ENCODE measurements at regions of chr19 and their contacts with region 1.

Region 1: GRCh38 chr19:46081928-46082727 is 41.3 kb upstream of the IGFL4 start:
- DNase-seq: no peak
- H3K4me3 ChIP-seq: no peak overlapping the region
- H3K27ac ChIP-seq: no peak overlapping the region
- H3K4me1 ChIP-seq: peaks cover 5% of the 10 kb centered on the region
- H3K27me3 ChIP-seq: peaks cover 76% of the 10 kb centered on the region
- CTCF ChIP-seq: peak; percentile 75

Region 2: DNA sequence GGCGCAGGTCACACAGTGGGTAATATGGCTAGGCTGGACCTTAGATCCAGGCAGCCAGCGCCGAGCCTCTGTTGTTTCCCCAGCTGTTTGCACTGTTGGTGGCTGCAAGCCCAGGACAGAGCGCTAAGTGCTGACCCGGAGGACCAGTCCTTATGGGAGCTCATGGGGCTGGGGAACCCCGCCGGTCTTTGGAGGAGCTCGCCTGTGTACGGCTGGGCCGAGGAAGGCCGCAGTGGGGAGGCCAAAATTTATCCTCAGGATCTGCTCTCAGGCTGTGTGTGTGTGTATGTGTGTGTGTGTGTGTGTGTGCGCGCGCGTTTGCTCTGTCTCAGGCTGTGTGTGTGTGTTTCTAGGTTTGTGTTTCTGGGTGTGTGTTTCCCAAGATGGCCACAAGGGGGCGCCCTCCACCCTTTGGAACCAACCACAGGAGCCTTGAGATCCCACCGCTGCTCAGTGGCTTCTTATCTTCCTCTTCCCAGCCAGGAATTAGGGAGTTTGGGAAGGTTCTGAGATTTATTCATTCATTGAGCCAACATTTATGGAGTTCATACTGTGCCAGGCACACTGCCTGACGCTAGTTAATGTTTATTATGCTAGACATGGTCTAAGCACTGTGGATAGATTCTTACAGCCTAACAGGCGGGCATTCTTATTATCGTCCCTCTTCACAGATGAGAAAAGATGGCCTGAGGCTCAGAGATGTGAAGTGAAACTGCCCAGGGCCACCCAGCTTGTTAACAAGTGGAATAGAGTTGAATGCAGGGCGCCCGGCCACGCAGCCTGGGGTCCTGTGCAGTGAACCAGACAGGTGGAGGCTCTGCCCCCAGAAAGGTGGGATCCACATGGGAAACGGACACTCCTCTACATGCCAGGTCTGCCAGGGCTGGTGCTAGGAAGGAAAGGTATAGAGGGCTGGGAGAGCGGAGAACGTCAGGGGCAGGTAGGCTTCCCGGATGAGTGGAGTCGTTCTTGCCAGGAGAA is 72.3 kb before region 1 on chr19:
- intact Hi-C with region 1: no loop called
- DNase-seq: peak; percentile 61
- H3K4me3 ChIP-seq: no peak overlapping the region
- H3K27ac ChIP-seq: no peak overlapping the region
- H3K4me1 ChIP-seq: peaks cover 5% of the 10 kb centered on the region
- H3K27me3 ChIP-seq: peaks cover 43% of the 10 kb centered on the region
- CTCF ChIP-seq: peak; percentile 86

Region 3: DNA sequence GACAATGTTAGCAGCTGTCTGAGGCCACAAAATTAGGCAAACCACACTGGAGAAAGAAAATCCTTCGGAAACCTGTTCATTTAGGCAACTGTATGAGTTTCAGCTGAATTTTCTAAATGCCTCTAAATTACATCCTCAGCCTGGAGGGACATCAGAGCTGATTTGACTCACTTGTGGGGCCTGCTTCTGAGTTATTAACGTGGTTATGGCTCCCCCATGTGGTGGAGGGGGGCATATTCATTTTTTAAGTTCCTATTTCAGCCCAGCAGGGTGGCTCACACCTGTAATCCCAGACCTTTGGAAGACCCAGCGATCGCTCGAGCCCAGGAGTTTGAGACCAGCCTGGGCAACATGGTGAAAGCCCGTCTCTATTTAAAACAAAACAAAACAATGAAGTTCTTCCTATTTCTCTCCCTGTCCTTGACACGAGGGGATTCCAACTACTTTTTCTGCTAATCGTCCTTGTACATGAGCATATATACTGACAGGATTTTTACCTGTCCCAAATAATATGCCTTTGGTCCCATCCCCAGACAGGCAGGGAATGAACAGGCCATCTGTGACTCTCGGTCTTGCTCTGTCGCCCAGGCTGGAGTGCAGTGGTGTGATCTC is 183.2 kb after region 1 on chr19:
- intact Hi-C with region 1: loop called (anchors 10 kb)
- DNase-seq: no peak
- H3K4me3 ChIP-seq: no peak overlapping the region
- H3K27ac ChIP-seq: no peak overlapping the region
- H3K4me1 ChIP-seq: no peaks in the 10 kb centered on the region
- H3K27me3 ChIP-seq: peaks cover 77% of the 10 kb centered on the region
- CTCF ChIP-seq: peak; percentile 90